Activated CD4-positive, alpha-beta memory T cell treated with anti-CD3 and anti-CD28 coated beads for 36 hours (primary cell): ENCODE measurements at regions of chr10 and their contacts with region 1.

Region 1: GRCh38 chr10:103504181-103504783 is 10.8 kb downstream of the NEURL1 start:
- DNase-seq: peak; percentile 69
- H3K4me3 Mint-ChIP-seq: peak overlapping the region; percentile 17
- H3K27ac Mint-ChIP-seq: peak overlapping the region; percentile 31
- H3K4me1 Mint-ChIP-seq: peaks cover 30% of the 10 kb centered on the region
- H3K27me3 Mint-ChIP-seq: peaks cover 41% of the 10 kb centered on the region

Region 2: DNA sequence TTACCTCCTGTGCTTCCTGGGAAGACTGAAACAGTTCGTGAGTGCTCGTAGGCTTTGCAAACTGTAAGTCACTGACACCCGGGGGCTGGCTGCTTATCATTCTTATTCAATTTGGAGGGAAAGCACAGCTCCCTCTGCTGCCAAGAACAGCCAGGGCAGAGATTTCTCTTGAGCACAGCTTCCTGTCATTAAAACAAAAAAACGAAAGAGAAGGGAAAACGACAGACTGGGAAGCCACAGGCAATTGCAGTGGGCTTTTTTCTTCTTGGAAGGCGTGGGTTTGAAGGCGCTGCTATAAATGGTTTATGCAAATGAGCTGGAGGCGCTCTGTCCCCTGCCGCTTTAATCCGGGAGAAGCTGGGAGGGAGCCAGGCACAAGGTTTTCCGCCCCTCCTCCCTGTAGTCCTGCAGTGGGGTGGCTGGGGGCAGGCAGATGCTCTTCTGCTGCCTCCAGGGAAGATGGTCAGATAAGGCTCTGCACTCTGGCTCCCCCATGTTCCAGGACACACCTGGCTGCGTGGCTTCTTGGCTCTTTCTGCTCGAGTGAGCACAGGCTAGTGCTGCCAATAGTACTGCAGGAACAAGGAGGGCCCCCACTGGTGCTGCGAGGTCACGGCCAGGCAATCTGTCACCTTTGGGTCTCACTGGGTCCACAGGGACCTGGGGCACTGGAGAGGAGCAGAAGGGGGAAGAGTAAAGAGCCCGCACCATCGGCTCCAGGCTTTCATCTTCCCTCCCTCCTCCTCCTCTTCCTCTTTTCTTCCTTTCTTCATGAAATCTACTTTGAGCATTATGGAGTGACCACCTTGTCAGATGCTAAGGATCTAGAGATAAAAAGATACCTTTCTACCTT is 38.7 kb after region 1 on chr10:
- CTCF ChIA-PET with region 1: interaction called, 4 read pairs
- POLR2A ChIA-PET with region 1: no interaction called
- intact Hi-C with region 1: loop called (anchors 2 kb)
- DNase-seq: peak; percentile 64
- H3K4me3 Mint-ChIP-seq: peak overlapping the region; percentile 51
- H3K27ac Mint-ChIP-seq: peak overlapping the region; percentile 50
- H3K4me1 Mint-ChIP-seq: peaks cover 12% of the 10 kb centered on the region
- H3K27me3 Mint-ChIP-seq: peaks cover 7% of the 10 kb centered on the region

Region 3: DNA sequence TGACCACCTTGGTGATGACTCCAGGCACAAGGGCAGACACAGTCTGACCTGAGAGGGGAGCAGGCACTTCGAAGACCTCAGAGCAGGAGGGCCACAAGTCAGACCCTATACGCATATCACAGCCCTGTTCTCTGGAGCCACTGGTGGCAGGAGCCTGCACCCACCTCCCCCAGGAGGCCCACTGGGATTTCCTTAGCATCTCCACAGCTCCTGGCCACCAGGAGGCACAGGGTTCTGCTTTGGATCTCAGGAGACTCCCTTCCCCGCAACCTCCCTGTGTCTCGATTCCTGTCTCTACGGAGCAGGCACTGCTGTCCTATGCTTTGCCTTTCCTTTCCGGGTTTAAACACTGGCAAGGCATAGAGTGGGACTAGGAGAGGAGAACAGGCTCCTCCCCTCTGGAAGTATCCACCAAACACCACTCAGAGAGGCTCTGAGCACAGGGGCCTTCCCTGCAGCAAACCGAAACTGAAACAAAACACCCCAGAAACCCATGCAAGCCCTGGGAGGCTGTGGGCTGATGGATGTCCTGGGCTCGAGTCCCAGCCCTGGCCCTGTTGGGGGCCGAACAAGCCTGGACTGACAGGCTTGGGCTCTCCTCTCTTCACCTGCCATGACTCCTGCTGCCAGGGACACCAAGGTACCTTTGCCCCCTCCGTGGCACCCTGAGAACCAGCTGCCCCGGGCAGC is 155.5 kb after region 1 on chr10:
- CTCF ChIA-PET with region 1: no interaction called
- POLR2A ChIA-PET with region 1: no interaction called
- intact Hi-C with region 1: no loop called
- DNase-seq: peak; percentile 71
- H3K4me3 Mint-ChIP-seq: peak overlapping the region; percentile 82
- H3K27ac Mint-ChIP-seq: peak overlapping the region; percentile 74
- H3K4me1 Mint-ChIP-seq: peaks cover 5% of the 10 kb centered on the region
- H3K27me3 Mint-ChIP-seq: no peaks in the 10 kb centered on the region